GM12878 (cell line): ENCODE measurements at regions of chr2 and their contacts with region 1.

Region 1: DNA sequence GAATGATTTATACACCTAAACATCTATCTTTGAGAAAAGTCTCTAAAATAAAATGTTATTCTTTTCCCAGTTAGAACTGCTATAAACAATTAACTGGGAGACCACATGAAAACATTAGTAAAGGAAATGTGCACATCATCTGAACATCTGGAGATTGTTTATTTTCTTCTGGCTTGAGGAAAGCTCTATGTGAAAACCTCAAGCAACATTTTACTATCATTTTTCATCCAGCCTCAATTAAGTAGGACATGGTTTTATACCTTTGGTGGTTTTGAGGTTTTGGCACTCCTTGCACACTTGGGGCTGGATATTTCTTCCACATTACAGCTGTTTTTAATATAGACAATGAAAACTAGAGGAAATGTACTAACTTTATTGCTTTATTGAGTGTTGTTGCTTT is 609.5 kb upstream of the SLC8A1 start:
- DNase-seq: no peak
- ATAC-seq: no peak
- H3K4me3 ChIP-seq: no peak overlapping the region
- H3K27ac ChIP-seq: no peak overlapping the region
- H3K4me1 ChIP-seq: no peaks in the 10 kb centered on the region
- H3K27me3 ChIP-seq: no peaks in the 10 kb centered on the region
- CTCF ChIP-seq: no peak
- EP300 ChIP-seq: no peak
- POLR2A ChIP-seq: no peak
- RAD21 ChIP-seq: no peak

Region 2: GRCh38 chr2:39796134-39796533 is 1265.2 kb before region 1 on chr2:
- CTCF ChIA-PET with region 1: no interaction called
- POLR2A ChIA-PET with region 1: no interaction called
- RAD21 ChIA-PET with region 1: no interaction called
- SMC1A ChIA-PET with region 1: no interaction called
- in situ Hi-C with region 1: no loop called
- intact Hi-C with region 1: loop called (anchors 10 kb)
- DNase-seq: no peak
- ATAC-seq: no peak
- H3K4me3 ChIP-seq: no peak overlapping the region
- H3K27ac ChIP-seq: no peak overlapping the region
- H3K4me1 ChIP-seq: no peaks in the 10 kb centered on the region
- H3K27me3 ChIP-seq: no peaks in the 10 kb centered on the region
- CTCF ChIP-seq: no peak
- EP300 ChIP-seq: no peak
- POLR2A ChIP-seq: no peak
- RAD21 ChIP-seq: no peak